ENCODE measurements at regions of chr16 and their contacts with region 1.

Region 1: DNA sequence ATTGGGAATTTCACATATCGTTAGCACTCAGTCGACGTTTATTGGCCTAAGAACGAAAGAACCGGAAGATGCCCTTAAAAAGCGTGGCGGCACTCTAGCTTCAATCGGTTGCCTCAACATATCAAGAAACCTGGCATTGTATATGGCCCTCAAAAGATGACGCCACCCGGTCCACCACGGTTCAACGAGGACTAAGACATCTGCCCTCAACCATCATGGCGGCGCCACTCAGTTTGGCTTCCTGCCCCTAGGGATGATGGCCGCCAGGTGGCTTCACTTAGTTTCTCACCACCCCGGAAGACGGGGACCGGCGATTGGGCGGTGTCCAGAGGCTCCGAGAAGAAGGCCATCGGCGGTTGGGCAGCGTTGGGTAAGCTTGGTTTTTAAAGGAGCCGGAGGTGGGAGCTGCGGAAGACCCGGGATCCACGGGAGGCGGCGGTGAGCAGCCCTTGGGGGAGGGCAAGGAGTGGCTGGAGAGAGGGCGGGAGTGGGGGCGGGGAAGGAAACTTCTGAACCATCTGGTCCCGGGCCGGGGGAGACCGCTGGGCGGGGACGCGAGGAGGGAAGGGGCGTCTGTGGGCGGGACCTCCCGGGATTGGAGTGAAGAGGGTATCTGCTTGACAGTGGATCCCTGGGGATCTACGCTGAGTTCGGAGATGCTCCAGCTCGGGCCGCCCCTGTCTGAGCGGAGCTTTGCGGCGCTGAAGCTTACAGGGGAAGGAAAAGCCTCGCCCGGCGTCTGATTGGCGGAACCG is at the start of gene PRR14:
- DNase-seq: peak; percentile 99 to 100
- H3K4me3 ChIP-seq: peak within 1 kb of the TSS; percentile 74 to 91
- H3K27ac ChIP-seq: peak within 1 kb of the TSS; percentile 95
- H3K4me1 ChIP-seq: peaks cover 6 to 18% of the 10 kb centered on the region in 2 donors
- H3K27me3 ChIP-seq: no peaks in the 10 kb centered on the region
- CTCF ChIP-seq: peak in 2 of 3 experiments; percentile 33 to 67
- total RNA-seq, gene PRR14: 124 TPM

Region 2: GRCh38 chr16:30557957-30558788 is 92.4 kb before region 1 on chr16 and contains the start of gene ZNF764:
- intact Hi-C with region 1: loop called (anchors 2 kb)
- DNase-seq: peak; percentile 96 to 99
- H3K4me3 ChIP-seq: peak within 1 kb of the TSS; percentile 91
- H3K27ac ChIP-seq: peak within 1 kb of the TSS; percentile 92 to 94
- H3K4me1 ChIP-seq: peaks cover 9 to 10% of the 10 kb centered on the region in 2 donors
- H3K27me3 ChIP-seq: no peaks in the 10 kb centered on the region
- CTCF ChIP-seq: peak in 1 of 3 experiments; percentile 1
- total RNA-seq, gene ZNF764: 10.9 TPM

Region 3: GRCh38 chr16:30571695-30572600 is 78.6 kb before region 1 on chr16 and contains the start of gene ZNF688:
- intact Hi-C with region 1: loop called (anchors 2 kb)
- DNase-seq: peak; percentile 97 to 99
- H3K4me3 ChIP-seq: peak within 1 kb of the TSS; percentile 83 to 92
- H3K27ac ChIP-seq: peak within 1 kb of the TSS; percentile 96 to 99
- H3K4me1 ChIP-seq: peaks cover 13 to 21% of the 10 kb centered on the region in 2 donors
- H3K27me3 ChIP-seq: no peaks in the 10 kb centered on the region
- CTCF ChIP-seq: peak in 1 of 3 experiments; percentile 17
- total RNA-seq, gene ZNF688: 11.3 TPM

Region 4: DNA sequence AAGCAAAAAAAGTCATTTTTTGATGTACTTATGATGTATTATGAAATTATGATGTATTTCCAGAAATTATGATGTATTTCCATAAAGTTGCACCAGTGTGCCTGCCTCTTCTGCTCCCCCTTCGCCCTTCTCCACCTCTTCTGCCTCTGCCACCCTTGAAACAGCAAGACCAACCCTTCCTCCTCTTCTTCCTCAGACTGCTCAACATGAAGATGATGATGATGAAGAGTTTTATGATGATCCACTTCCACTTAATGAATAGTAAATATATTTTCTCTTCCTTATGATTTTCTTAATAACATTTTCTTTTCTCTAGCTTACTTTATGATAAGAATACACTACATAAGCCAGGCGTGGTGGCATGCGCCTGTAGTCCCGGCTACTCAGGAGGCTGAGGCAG is 57.7 kb before region 1 on chr16:
- intact Hi-C with region 1: no loop called
- DNase-seq: no peak
- H3K4me3 ChIP-seq: no peak overlapping the region
- H3K27ac ChIP-seq: no peak overlapping the region
- H3K4me1 ChIP-seq: no peaks in the 10 kb centered on the region
- H3K27me3 ChIP-seq: no peaks in the 10 kb centered on the region
- CTCF ChIP-seq: no peak

Region 5: DNA sequence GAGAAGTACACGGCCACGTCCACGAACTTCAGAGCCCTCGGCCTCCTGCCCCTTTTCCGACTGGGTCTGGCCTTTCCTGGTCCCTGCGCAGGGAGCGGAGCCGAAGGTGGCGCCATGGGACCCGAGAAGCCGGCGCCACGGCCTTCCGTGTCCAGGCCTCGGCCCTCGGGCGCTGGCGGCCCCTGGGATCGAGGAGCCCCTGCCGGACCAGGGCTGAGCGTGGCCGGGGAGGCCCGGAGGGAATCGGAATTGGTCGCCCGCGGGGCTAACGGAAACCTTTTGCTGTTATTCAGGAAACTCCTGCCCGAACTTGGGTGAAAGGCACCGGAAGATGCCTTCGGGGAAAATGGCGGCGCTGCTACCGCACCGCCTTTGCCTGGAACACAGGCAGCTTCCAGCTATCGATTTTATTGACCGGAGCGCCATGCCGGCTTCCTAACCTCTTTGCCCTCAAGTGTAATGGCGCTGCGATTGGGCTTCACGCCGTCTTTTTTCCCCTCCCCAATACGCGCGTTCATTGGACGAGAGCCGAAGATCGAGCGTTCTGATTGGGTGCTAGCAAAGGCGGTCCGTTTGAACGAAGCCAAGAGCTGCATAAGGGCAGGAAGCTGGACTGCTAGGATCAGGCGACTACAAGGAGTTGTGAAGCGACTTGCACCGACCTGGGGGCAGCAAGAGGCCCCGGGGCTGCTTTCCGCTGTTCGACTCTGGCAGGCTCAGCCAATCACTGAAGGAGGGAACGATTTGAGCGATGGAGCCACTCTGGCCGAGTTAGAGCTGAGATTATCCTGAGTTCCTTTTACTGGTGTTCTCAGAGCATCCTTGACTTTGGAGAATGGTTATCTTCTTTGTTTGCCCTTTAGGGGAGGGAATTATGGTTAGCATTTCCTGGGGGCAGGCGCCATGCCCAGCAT is 40.4 kb before region 1 on chr16 and contains the start of gene ZNF689:
- intact Hi-C with region 1: loop called (anchors 2 kb)
- DNase-seq: peak; percentile 73 to 97
- H3K4me3 ChIP-seq: peak within 1 kb of the TSS; percentile 81 to 88
- H3K27ac ChIP-seq: peak within 1 kb of the TSS; percentile 88 to 96
- H3K4me1 ChIP-seq: peaks cover 0 to 10% of the 10 kb centered on the region in 2 donors
- H3K27me3 ChIP-seq: no peaks in the 10 kb centered on the region
- CTCF ChIP-seq: peak in 1 of 3 experiments; percentile 5
- total RNA-seq, gene ZNF689: 7.0 TPM

Region 6: GRCh38 chr16:30710971-30711370 is 60.4 kb after region 1 on chr16:
- intact Hi-C with region 1: no loop called
- DNase-seq: no peak
- H3K4me3 ChIP-seq: no peak overlapping the region
- H3K27ac ChIP-seq: no peak overlapping the region
- H3K4me1 ChIP-seq: no peaks in the 10 kb centered on the region
- H3K27me3 ChIP-seq: no peaks in the 10 kb centered on the region
- CTCF ChIP-seq: no peak

Measured in ascending aorta (tissue), 2 donors.